PC-3 (cell line): ENCODE measurements at regions of chr3 and their contacts with region 1.

Region 1: GRCh38 chr3:72429589-72430353 is 418.5 kb downstream of the SHQ1 start:
- DNase-seq: no peak
- ATAC-seq: no peak
- H3K4me3 ChIP-seq: no peak overlapping the region
- H3K27ac ChIP-seq: no peak overlapping the region
- H3K4me1 ChIP-seq: no peaks in the 10 kb centered on the region
- H3K27me3 ChIP-seq: no peaks in the 10 kb centered on the region
- CTCF ChIP-seq: no peak

Region 2: DNA sequence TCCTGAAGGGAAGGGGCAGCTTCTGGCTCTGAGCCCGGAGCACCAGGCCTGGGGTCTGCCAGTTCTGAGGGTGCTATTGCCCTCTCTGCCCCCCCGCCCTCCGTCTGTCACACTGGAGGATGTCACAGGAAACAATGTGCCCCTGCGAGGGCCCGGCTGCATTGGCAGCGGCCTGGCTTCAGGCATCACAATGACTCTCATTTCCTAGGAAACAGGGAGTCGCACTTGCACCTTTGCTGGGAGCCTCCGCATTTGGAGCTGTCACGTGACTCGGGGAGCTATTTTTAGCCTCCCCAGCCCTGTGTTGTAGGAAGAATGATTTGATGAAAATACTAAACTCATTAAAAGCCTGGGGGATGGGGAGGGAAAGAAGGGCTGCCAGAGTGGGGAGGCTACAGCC is 100.4 kb before region 1 on chr3:
- CTCF ChIA-PET with region 1: no interaction called
- POLR2A ChIA-PET with region 1: no interaction called
- intact Hi-C with region 1: loop called (anchors 5 kb)
- DNase-seq: no peak
- ATAC-seq: no peak
- H3K4me3 ChIP-seq: no peak overlapping the region
- H3K27ac ChIP-seq: no peak overlapping the region
- H3K4me1 ChIP-seq: no peaks in the 10 kb centered on the region
- H3K27me3 ChIP-seq: no peaks in the 10 kb centered on the region
- CTCF ChIP-seq: no peak